Endothelial cell of umbilical vein (primary cell): ENCODE measurements at regions of chr1 and their contacts with region 1.

Region 1: DNA sequence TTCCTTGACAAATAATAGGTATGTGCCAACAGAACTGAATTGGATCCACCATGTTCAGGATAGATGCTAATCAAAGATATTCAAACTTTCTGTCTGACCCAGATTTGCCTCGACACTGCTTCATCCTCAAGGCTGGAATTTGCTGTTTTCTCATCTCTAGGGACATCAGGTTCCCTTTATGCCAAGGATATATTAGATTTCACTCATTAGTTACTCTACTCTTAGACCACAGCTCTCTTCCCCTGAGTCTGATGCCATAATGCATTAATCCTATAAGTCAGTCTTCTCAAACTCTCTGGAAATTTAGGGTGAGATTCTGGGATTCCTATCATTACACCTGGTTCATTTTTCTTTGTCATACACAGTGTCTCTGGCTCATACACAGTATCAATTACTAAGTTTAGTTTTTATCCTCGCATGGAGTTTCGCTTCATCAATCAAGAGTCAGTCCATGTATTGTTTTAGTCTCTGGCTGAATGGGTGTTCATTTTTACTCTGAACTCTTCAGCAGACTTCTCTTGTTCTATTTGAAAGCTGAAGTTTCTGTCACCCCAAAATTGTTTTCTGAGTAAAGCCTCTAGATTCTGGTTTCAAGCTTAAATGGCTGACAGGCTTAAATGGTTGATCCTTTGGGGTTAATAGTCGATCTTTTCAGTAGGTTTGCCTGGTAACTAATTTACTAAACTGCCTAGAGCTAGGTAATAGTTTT is 9.3 kb upstream of the DCAF6 start:
- DNase-seq: no peak
- H3K4me3 ChIP-seq: no peak overlapping the region
- H3K27ac ChIP-seq: no peak overlapping the region
- H3K4me1 ChIP-seq: peaks cover 5% of the 10 kb centered on the region
- H3K27me3 ChIP-seq: no peaks in the 10 kb centered on the region
- CTCF ChIP-seq: no peak
- POLR2A ChIP-seq: no peak

Region 2: GRCh38 chr1:167909631-167910180 is 17.5 kb before region 1 on chr1:
- CTCF ChIA-PET with region 1: interaction called, 5 read pairs
- POLR2A ChIA-PET with region 1: no interaction called
- dilution Hi-C with region 1: no loop called
- intact Hi-C with region 1: loop called (anchors 2 kb)
- DNase-seq: no peak
- H3K4me3 ChIP-seq: no peak overlapping the region
- H3K27ac ChIP-seq: no peak overlapping the region
- H3K4me1 ChIP-seq: peaks cover 3% of the 10 kb centered on the region
- H3K27me3 ChIP-seq: no peaks in the 10 kb centered on the region
- CTCF ChIP-seq: no peak
- POLR2A ChIP-seq: no peak